Activated T-helper 2 cell treated with anti-CD3 and anti-CD28 coated beads, Interferon-gamma antibody, Interleukin-2, Interleukin-4, amounts not matched to agents 10 μg/mL and 5 μg/mL and 100 μg/mL, durations not matched to agents 14 hours and 24 hours and 36 hours (primary cell): ENCODE measurements at regions of chr18 and their contacts with region 1.

Region 1: DNA sequence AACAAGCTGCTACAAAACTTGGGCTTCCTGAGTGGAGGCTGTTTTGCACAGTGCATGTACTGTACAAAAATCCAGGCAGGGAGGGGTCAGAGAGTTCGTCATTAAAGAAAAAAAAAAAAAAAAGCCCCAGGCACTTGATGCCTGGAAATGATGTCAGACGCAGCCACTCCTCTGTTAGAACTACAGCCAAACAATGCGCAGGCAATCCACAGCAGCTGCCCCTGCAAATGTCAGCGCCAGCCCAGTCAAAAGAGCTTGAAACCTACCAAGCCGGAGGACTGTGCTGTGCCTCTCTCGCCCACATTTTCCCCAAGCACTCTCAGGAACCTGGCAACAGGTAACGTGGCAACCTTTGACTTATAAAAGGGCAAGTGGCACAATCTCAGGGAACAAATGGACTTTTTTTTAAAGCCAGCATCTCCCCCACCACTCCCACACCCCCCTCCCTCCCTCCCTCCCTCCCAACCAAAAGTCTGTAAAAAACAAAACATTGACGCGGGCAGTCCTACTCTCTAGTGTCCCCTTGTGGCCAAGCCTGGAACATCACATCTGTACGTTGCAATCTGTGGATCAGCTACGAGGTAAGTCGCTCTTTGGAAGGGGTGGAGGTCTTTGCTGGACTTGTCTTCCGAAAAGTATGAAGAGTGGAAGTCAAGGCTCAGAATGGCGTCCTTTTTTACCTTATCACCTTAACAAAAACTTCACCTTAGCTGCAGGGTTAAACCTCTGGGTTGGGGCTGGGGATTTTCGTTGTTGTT is 144.1 kb downstream of the TGIF1 start:
- DNase-seq: peak; percentile 84
- H3K4me3 Mint-ChIP-seq: peak overlapping the region; percentile 88
- H3K27ac Mint-ChIP-seq: peak overlapping the region; percentile 98
- H3K4me1 Mint-ChIP-seq: peaks cover 49% of the 10 kb centered on the region
- H3K27me3 Mint-ChIP-seq: no peaks in the 10 kb centered on the region

Region 2: DNA sequence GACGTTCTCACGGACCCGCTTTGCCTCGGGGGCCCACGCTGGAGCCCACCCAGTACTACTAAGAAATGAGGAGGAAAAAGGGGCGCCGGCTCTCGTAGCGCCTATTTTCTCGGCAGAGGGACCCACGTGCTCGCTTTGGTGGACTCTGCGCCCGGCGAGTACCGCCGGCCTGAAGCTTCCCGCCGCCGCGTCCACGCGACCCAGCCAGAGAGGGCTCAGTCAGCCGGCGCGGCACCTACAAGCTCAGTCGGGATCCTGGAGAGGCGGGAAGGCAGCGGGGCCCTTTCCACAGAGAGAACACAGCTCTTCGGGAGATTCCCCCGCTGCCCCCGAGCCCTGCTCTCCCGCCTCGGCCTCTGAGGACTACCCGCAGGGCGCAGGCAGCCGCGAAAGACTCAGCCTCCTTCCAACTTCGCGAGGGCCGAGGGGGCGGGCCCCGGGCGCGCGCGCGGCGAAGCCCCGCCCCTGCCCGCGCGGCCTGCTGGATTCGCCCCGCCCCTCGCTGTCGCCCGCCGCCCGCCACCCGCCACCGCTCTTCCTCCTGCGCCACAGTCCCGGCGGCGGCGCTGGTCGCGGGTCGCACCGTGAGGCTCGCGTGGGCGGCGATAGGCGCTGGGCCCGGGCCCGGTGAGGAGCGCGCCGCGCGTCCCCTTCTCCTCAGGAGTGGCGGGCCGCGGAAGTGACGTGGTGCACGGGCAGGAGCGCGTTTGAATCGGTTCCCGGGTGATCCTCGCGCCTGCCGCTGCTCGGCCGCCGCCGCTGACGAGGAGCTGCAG is 938.7 kb before region 1 on chr18 and contains the start of gene SMCHD1:
- intact Hi-C with region 1: loop called (anchors 1 kb)
- DNase-seq: peak; percentile 86
- H3K4me3 Mint-ChIP-seq: peak within 1 kb of the TSS; percentile 98
- H3K27ac Mint-ChIP-seq: peak within 1 kb of the TSS; percentile 95
- H3K4me1 Mint-ChIP-seq: peaks cover 33% of the 10 kb centered on the region
- H3K27me3 Mint-ChIP-seq: peaks cover 5% of the 10 kb centered on the region
- total RNA-seq, gene SMCHD1: 100 and 101 TPM in 2 replicates

Region 3: DNA sequence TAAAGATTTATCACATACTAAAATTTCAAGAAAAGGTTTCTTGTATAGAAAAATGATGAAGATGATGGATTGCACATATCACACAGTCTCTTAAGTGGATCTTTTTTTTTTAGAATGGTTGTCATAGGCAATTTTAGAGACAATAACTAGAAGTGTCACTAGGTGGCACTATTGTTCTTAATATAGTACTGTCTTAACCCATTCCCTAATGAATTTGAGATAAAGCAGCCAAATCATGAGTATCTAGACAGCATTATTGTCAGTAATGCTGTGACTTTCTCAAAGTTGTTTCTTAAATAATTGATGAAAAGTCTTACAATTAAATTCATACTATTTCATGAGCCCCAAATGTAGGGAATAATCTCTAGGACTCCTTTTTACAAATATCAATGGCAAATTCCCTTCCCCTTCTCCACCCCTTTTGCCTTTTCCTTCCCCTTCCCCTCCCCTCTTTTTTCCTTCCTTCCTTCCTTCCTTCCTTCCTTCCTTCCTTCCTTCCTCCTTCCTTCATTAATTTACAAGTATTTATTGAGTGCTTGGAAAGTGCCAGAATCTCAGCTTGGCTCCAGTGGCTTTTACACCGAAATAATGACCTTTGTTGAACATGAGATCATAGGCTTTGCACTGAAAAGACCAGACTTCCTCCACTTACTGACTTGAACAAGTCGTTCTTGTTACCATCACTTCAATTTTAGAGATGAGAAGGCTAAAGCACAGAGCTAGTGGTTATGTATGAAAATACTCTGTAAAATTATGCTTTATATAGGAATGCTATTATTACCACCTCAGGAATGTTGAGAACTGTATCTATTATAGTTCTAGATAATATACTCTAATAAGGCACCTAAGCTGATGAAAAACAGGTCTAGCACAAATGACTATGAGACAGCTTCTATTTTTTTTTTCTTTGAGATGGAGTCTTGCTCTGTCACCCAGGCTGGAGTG is 312.4 kb before region 1 on chr18:
- intact Hi-C with region 1: loop called (anchors 2 kb)
- DNase-seq: no peak
- H3K4me3 Mint-ChIP-seq: no peak overlapping the region
- H3K27ac Mint-ChIP-seq: peak overlapping the region; percentile 38
- H3K4me1 Mint-ChIP-seq: peaks cover 5% of the 10 kb centered on the region
- H3K27me3 Mint-ChIP-seq: no peaks in the 10 kb centered on the region

Region 4: DNA sequence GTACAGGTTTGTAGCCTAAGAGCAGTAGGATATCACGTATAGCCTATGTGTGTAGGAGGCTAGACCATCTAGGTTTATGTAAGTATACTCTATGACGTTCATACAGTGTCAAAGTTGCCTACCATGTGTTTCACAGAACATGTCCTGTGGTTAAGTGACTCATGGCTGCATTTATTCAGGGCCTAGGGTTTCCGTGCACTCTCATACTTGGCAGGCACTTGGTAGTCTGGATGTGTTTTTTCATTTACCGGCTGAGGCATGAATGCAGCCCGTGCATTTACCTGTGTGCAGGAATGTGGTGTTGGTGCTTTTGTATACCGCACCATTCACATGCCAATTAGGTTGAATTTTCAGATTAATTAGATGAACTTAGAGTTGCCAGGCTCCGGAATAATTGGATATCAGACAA is 288.7 kb before region 1 on chr18:
- intact Hi-C with region 1: loop called (anchors 2 kb)
- DNase-seq: peak; percentile 39
- H3K4me3 Mint-ChIP-seq: peak overlapping the region; percentile 20
- H3K27ac Mint-ChIP-seq: peak overlapping the region; percentile 99
- H3K4me1 Mint-ChIP-seq: peaks cover 22% of the 10 kb centered on the region
- H3K27me3 Mint-ChIP-seq: peaks cover 22% of the 10 kb centered on the region

Region 5: DNA sequence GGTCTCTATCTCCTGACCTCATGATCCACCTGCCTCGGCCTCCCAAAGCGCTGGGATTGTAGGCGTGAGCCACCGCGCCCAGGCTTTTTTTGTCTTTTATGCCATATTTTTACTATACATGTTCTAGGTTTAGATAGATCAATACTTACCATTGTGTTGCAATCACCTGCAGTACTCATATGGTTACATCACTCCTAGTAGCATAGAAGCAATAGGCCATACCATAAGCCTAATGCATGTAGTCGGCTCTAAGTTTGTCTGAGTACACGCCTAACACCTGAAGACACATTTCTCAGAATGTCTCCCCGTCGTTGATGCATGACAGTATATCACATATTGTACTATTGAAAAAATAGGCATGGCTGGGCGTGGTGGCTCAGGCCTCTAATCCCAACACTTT is 171.2 kb before region 1 on chr18:
- intact Hi-C with region 1: no loop called
- DNase-seq: no peak
- H3K4me3 Mint-ChIP-seq: no peak overlapping the region
- H3K27ac Mint-ChIP-seq: no peak overlapping the region
- H3K4me1 Mint-ChIP-seq: no peaks in the 10 kb centered on the region
- H3K27me3 Mint-ChIP-seq: no peaks in the 10 kb centered on the region

Region 6: DNA sequence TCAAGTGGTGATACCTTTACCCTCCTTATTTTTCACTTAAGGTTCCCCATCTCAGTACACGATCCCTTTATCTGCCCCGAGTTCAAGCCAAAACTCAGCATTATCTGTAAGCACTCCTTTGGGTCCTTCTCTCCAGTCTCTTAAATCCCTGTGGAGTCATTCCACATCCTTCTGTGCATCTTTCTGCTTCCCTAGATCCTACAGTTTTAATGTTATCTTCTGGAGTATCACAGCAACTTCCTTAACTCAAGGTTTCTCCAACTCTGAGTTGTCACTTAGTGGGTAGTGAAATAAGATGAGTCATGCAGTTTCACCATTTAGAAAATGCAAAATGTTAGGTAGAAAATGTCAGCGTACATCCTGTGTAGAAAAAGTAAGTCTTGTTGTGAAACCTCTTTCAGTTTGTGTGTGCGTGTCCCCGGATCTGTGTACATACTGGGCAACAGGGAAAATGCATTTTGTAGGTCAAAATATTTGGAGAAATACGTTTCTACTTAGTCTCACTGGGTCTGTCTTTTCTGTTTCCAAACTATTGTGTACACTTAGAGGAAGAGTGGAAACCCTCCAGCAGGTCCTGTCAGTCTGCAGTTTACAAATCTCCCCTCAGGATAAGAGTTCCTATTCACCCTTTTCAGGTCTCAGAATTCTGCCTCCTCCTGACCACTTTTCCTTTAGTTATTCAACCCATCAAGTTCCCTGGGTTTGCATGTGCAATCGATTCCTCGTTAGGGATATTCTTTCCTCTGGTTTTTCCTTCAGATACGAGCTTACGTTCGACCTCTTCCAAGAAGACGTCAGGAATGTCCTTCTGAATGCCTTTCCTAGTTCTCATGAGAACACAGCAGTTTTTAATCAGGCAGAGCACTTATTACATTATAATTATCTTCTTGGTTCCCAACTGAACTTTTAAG is 10.7 kb after region 1 on chr18:
- intact Hi-C with region 1: loop called (anchors 1 kb)
- DNase-seq: no peak
- H3K4me3 Mint-ChIP-seq: no peak overlapping the region
- H3K27ac Mint-ChIP-seq: no peak overlapping the region
- H3K4me1 Mint-ChIP-seq: peaks cover 16% of the 10 kb centered on the region
- H3K27me3 Mint-ChIP-seq: no peaks in the 10 kb centered on the region

Region 7: DNA sequence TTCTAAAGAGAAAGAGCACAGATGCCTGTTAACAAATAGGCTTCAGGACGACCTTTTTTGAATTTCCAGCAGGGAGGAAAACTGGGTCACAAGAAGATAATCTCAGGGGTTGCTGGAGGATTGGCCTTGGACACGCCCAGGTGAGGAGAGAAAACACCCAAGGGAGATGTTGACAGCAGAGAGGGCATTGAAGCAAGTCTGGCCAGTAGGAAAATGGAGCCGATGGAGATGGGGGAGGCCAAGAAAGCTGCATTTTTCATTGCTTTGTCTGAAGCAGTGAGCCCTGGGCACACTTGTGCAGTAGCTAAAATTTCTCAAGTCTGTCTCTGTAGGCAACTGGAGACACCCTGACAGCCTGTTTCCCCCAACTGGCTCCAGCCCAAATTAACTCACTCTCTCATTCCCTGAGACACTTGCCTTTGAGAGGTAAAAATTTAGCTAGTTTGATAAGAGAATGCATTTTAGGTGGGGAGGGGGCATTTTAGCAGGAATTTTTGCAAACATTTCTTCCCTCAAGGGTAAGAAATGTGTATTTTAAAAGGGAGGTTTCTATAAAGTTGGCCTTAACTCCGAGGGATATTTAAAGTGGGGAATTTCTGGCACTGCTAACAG is 21.4 kb after region 1 on chr18:
- intact Hi-C with region 1: no loop called
- DNase-seq: no peak
- H3K4me3 Mint-ChIP-seq: no peak overlapping the region
- H3K27ac Mint-ChIP-seq: no peak overlapping the region
- H3K4me1 Mint-ChIP-seq: peaks cover 14% of the 10 kb centered on the region
- H3K27me3 Mint-ChIP-seq: no peaks in the 10 kb centered on the region

Region 8: GRCh38 chr18:3652380-3653262 is 58.5 kb after region 1 on chr18:
- intact Hi-C with region 1: loop called (anchors 2 kb)
- DNase-seq: peak; percentile 34
- H3K4me3 Mint-ChIP-seq: peak overlapping the region; percentile 60
- H3K27ac Mint-ChIP-seq: peak overlapping the region; percentile 92
- H3K4me1 Mint-ChIP-seq: peaks cover 53% of the 10 kb centered on the region
- H3K27me3 Mint-ChIP-seq: no peaks in the 10 kb centered on the region